Pancreas (tissue), 10 donors: ENCODE measurements at regions of chr12 and their contacts with region 1.

Region 1: DNA sequence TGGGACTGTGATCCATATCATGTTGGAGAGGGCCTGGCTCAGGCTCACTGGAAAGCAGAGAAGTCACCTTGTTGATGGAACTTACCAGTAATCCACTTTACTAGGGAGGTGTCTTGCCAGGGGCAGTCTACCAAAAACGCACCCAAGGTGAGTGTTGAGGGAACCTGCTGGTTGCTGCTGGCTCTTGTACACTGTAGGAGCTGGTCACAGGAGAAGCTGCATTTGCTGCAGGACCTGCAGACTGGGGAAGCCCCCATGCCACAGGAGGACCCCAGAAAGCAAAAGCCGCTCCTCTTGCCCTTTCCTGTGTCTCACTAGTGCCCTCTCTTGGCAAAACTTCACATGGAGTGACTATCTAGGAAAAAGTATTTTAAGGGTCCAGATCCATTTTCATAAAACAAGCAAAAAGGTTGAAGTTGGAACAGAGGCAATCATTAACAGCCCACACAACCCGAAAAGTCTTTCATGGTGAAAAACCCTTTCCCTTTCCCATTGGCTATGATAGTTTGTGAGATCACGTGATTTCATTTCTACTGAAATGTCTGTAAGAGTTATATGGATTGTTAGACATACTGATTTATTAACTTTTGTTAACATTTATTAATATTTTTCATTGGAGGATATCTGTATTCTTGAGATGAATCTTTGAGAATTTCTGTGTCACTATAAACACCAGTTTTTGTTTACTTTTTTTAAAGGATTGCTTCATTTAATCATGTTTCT is 59.2 kb downstream of the RASSF8 start:
- DNase-seq: peak in 1 of 6 donors; percentile 29
- ATAC-seq: peak; percentile 24 to 78 (median 56)
- H3K4me3 ChIP-seq: peak overlapping the region in 1 of 4 donors; percentile 5
- H3K27ac ChIP-seq: no peak overlapping the region
- H3K4me1 ChIP-seq: peaks cover 0 to 4% (median 0%) of the 10 kb centered on the region in 3 donors
- H3K27me3 ChIP-seq: no peaks in the 10 kb centered on the region
- CTCF ChIP-seq: peak in 3 of 4 donors; percentile 25 to 29 (median 28)

Region 2: DNA sequence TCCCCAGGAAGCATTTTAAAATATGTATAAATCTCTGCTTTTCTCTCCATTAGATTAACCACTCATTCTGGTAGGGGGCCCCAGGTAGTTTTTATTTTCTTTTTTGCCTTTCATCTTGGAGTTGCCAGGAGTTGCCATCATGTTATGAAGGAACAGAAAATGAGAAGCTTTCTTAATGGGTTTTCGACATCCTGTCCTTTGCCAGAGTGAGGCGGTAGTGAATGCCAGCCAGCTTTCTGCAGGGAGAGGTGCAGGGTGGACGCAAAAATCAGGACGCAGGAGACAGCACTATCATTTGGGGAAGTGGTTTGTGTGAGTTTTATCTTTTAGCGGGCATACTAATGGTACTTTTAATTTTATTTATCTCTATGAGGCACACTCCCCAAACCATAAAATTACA is 57.5 kb before region 1 on chr12:
- intact Hi-C with region 1: loop called in 1 of 3 experiments (anchors 10 kb)
- DNase-seq: no peak
- ATAC-seq: no peak
- H3K4me3 ChIP-seq: peak overlapping the region in 3 of 4 donors; percentile 68 to 87 (median 81)
- H3K27ac ChIP-seq: no peak overlapping the region
- H3K4me1 ChIP-seq: no peaks in the 10 kb centered on the region
- H3K27me3 ChIP-seq: no peaks in the 10 kb centered on the region
- CTCF ChIP-seq: no peak